Activated CD4-positive, alpha-beta memory T cell treated with anti-CD3 and anti-CD28 coated beads, Interleukin-2, amount 10 ng/mL, durations not matched to agents 7 days and 5 days (primary cell): ENCODE measurements at regions of chr17 and their contacts with region 1.

Region 1: DNA sequence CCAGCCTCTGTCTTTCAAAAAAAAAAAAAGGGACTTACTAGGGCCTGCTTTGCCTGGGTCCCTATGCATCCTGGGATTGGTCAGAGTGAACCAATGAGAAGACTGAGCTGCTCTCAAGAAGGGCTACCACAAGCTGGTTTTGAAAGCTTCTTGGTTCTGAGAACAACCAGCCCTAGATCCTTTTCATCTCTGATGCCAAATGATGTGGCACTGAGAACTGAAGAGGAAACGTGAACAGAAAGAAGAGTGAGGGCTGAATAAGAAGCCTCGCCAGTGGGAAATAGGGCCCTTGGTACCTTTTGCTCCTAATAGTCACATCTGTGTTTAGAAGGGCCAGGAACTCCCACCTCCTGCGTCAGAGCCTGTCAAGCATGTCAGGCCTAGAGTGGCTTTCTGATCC is 10.7 kb downstream of the TACO1 start:
- DNase-seq: peak; percentile 57
- H3K4me3 Mint-ChIP-seq: peak overlapping the region; percentile 70
- H3K27ac Mint-ChIP-seq: peak overlapping the region; percentile 99
- H3K4me1 Mint-ChIP-seq: peaks cover 34% of the 10 kb centered on the region
- H3K27me3 Mint-ChIP-seq: no peaks in the 10 kb centered on the region

Region 2: GRCh38 chr17:63406689-63407330 is 204.5 kb before region 1 on chr17:
- CTCF ChIA-PET with region 1: interaction called, 19 read pairs
- POLR2A ChIA-PET with region 1: no interaction called
- DNase-seq: peak; percentile 72
- H3K4me3 Mint-ChIP-seq: no peak overlapping the region
- H3K27ac Mint-ChIP-seq: no peak overlapping the region
- H3K4me1 Mint-ChIP-seq: peaks cover 6% of the 10 kb centered on the region
- H3K27me3 Mint-ChIP-seq: no peaks in the 10 kb centered on the region

Region 3: DNA sequence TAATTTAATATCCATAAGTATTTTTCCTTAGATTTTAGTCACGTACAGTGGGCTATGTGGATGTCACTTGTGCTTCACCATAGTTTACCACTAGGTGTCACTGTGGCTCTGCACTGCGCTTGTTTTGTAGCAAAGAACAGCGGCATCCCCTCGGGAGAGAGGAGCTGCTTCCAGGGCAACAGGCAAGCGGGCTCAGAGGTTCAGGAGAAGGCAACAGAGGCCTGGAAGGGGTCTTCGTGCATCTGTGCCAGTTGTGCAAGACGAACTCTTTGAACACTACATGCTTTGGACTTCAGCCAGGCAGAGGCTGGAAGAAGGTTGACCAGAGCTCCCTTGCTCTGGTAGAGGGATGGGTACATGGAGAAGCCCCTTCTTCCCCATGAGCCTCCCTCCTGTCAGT is 185.9 kb before region 1 on chr17:
- CTCF ChIA-PET with region 1: interaction called, 180 read pairs
- POLR2A ChIA-PET with region 1: interaction called, 27 read pairs
- DNase-seq: peak; percentile 79
- H3K4me3 Mint-ChIP-seq: no peak overlapping the region
- H3K27ac Mint-ChIP-seq: no peak overlapping the region
- H3K4me1 Mint-ChIP-seq: peaks cover 50% of the 10 kb centered on the region
- H3K27me3 Mint-ChIP-seq: no peaks in the 10 kb centered on the region

Region 4: GRCh38 chr17:63445979-63446691 is 165.2 kb before region 1 on chr17 and contains the start of gene CYB561:
- CTCF ChIA-PET with region 1: interaction called, 6 read pairs
- POLR2A ChIA-PET with region 1: interaction called, 12 read pairs
- DNase-seq: peak; percentile 74
- H3K4me3 Mint-ChIP-seq: peak within 1 kb of the TSS; percentile 64
- H3K27ac Mint-ChIP-seq: peak within 1 kb of the TSS; percentile 69
- H3K4me1 Mint-ChIP-seq: peaks cover 46% of the 10 kb centered on the region
- H3K27me3 Mint-ChIP-seq: peaks cover 3% of the 10 kb centered on the region
- total RNA-seq, gene CYB561: 28.9 to 30.3 TPM

Region 5: GRCh38 chr17:63549946-63550807 is 61.2 kb before region 1 on chr17 and contains the start of gene DCAF7:
- CTCF ChIA-PET with region 1: interaction called, 30 read pairs
- POLR2A ChIA-PET with region 1: interaction called, 34 read pairs
- DNase-seq: peak; percentile 100
- H3K4me3 Mint-ChIP-seq: peak within 1 kb of the TSS; percentile 86
- H3K27ac Mint-ChIP-seq: peak within 1 kb of the TSS; percentile 96
- H3K4me1 Mint-ChIP-seq: peaks cover 32% of the 10 kb centered on the region
- H3K27me3 Mint-ChIP-seq: no peaks in the 10 kb centered on the region
- total RNA-seq, gene DCAF7: 138 to 139 TPM

Region 6: GRCh38 chr17:63621766-63622519 is 10.6 kb after region 1 on chr17 and contains the start of gene MAP3K3:
- CTCF ChIA-PET with region 1: interaction called, 52 read pairs
- POLR2A ChIA-PET with region 1: interaction called, 33 read pairs
- DNase-seq: peak; percentile 98
- H3K4me3 Mint-ChIP-seq: peak within 1 kb of the TSS; percentile 99
- H3K27ac Mint-ChIP-seq: peak within 1 kb of the TSS; percentile 89
- H3K4me1 Mint-ChIP-seq: peaks cover 35% of the 10 kb centered on the region
- H3K27me3 Mint-ChIP-seq: peaks cover 8% of the 10 kb centered on the region
- total RNA-seq, gene MAP3K3: 46.5 to 47.8 TPM